ENCODE measurements at regions of chr2 and their contacts with region 1.

Region 1: DNA sequence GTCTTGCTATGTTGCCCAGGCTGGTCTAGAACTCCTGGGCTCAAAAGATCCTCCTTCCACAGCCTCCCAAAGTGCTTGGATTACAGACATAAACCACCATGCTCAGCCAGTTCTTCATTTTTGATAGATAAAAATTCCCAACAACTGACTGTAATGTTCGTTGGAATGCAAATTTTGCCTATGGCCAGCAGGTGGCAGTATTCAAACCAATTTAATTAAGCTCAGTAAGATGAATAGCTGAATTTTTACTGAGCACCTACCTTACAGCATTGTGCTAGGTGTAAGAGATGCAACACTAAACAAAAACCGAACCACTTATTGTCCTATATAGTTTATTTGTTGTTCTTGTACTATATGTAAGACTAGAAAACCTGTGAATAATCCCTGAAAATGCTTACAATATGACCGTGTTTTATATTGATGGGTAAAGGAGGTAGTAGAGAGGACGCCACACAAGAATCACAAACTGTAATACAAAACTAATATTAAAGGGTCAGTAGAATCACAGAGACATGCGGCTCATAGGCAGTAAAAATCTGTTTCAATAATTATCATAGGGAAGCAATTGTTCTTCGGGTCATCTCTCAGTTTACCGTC is 8.2 kb upstream of the TMEM182 start:
- DNase-seq: peak in 6 of 9 donors; percentile 11 to 34 (median 26)
- ATAC-seq: peak; percentile 54
- H3K4me3 ChIP-seq: no peak overlapping the region
- H3K4me3 Mint-ChIP-seq: no peak overlapping the region
- H3K27ac ChIP-seq: no peak overlapping the region
- H3K27ac Mint-ChIP-seq: no peak overlapping the region
- H3K4me1 ChIP-seq: no peaks in the 10 kb centered on the region
- H3K4me1 Mint-ChIP-seq: peaks cover 0 to 9% (median 0%) of the 10 kb centered on the region in 7 donors
- H3K27me3 ChIP-seq: no peaks in the 10 kb centered on the region
- H3K27me3 Mint-ChIP-seq: no peaks in the 10 kb centered on the region

Region 2: GRCh38 chr2:102487761-102488466 is 265.7 kb before region 1 on chr2:
- CTCF ChIA-PET with region 1: no interaction called
- POLR2A ChIA-PET with region 1: no interaction called
- intact Hi-C with region 1: no loop called
- DNase-seq: no peak
- ATAC-seq: no peak
- H3K4me3 ChIP-seq: no peak overlapping the region
- H3K4me3 Mint-ChIP-seq: no peak overlapping the region
- H3K27ac ChIP-seq: no peak overlapping the region
- H3K27ac Mint-ChIP-seq: no peak overlapping the region
- H3K4me1 ChIP-seq: no peaks in the 10 kb centered on the region
- H3K4me1 Mint-ChIP-seq: peaks cover 0 to 11% (median 0%) of the 10 kb centered on the region in 7 donors
- H3K27me3 ChIP-seq: no peaks in the 10 kb centered on the region
- H3K27me3 Mint-ChIP-seq: peaks cover 16 to 34% (median 30%) of the 10 kb centered on the region in 5 donors

Region 3: DNA sequence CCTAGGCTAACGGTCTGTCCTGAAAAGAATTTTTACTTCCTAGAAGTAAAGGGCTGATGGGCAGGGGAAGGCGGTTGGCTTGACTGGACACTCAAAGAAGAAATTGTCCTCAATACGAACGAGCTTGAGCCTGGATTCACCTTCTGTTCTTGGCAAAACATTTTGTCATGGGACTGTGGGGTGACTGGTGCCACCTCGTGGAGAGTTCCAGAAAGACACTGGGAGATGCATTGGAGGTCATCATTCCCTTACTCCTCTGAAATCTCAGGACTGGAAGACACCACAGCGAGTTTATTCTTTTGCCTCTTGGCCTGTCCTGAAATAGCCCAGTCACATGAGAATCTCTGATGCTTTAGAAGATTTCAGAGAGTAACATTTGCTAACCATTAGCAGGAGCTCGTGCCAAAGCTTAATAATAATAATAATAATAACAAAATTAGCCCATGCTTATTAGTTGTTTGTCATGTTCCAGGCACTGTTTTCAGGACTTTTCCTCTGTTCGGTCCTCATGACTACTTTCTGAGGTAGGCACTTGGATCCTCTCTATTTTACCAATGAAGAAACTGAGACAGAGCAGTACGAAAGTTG is 52.7 kb after region 1 on chr2:
- CTCF ChIA-PET with region 1: no interaction called
- POLR2A ChIA-PET with region 1: no interaction called
- intact Hi-C with region 1: loop called (anchors 1 kb)
- DNase-seq: peak in 5 of 9 donors; percentile 5 to 41 (median 14)
- ATAC-seq: peak; percentile 63
- H3K4me3 ChIP-seq: no peak overlapping the region
- H3K4me3 Mint-ChIP-seq: no peak overlapping the region
- H3K27ac ChIP-seq: no peak overlapping the region
- H3K27ac Mint-ChIP-seq: no peak overlapping the region
- H3K4me1 ChIP-seq: peaks cover 7 to 8% of the 10 kb centered on the region in 2 donors
- H3K4me1 Mint-ChIP-seq: peaks cover 9 to 23% (median 20%) of the 10 kb centered on the region in 7 donors
- H3K27me3 ChIP-seq: no peaks in the 10 kb centered on the region
- H3K27me3 Mint-ChIP-seq: peaks cover 0 to 8% (median 0%) of the 10 kb centered on the region in 5 donors

Region 4: DNA sequence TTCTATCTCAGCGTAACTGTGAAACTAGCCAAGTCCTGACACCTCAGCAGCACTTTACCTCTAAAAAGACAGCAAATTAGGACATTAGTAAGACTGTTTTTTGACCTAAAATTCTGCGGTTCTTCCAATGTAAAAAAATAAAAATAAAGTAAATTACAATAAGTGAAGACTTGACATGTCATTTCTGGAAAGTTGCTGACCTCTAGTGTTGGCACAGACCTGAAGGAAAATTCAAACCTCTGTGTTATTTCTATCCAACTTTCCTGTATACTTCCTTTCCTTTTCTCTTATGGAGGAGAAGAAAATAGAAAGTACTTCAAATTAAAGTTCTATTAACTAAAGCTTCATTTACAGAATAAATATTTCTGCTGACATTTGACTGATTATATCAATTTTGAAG is 118.7 kb after region 1 on chr2:
- CTCF ChIA-PET with region 1: no interaction called
- POLR2A ChIA-PET with region 1: no interaction called
- intact Hi-C with region 1: loop called in 1 of 2 experiments (anchors 1 kb)
- DNase-seq: no peak
- ATAC-seq: no peak
- H3K4me3 ChIP-seq: no peak overlapping the region
- H3K4me3 Mint-ChIP-seq: no peak overlapping the region
- H3K27ac ChIP-seq: no peak overlapping the region
- H3K27ac Mint-ChIP-seq: no peak overlapping the region
- H3K4me1 ChIP-seq: no peaks in the 10 kb centered on the region
- H3K4me1 Mint-ChIP-seq: no peaks in the 10 kb centered on the region
- H3K27me3 ChIP-seq: no peaks in the 10 kb centered on the region
- H3K27me3 Mint-ChIP-seq: peaks cover 0 to 7% (median 0%) of the 10 kb centered on the region in 5 donors

Region 5: DNA sequence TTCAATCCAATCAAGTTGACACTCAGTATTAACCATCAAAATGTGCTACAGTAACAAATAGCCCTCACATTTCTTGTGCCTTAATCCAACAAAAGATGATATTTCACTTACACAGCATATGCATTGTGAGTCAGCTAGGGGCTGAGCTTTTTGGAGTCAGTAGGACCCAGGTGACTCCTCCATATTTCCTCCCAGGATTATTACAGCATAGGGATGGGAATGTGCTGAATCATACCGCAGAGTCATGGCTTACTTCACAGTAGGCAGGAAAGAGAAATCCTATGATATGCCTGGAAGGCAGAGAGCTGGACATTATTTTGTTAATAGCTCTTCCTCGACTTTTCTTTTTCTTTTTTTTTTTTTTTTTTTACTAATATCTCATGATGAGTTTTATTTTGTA is 161.5 kb after region 1 on chr2:
- CTCF ChIA-PET with region 1: no interaction called
- POLR2A ChIA-PET with region 1: no interaction called
- intact Hi-C with region 1: no loop called
- DNase-seq: no peak
- ATAC-seq: no peak
- H3K4me3 ChIP-seq: no peak overlapping the region
- H3K4me3 Mint-ChIP-seq: no peak overlapping the region
- H3K27ac ChIP-seq: no peak overlapping the region
- H3K27ac Mint-ChIP-seq: no peak overlapping the region
- H3K4me1 ChIP-seq: no peaks in the 10 kb centered on the region
- H3K4me1 Mint-ChIP-seq: no peaks in the 10 kb centered on the region
- H3K27me3 ChIP-seq: no peaks in the 10 kb centered on the region
- H3K27me3 Mint-ChIP-seq: peaks cover 0 to 5% (median 0%) of the 10 kb centered on the region in 5 donors